AG04450 (cell line): ENCODE measurements at regions of chr2 and their contacts with region 1.

Region 1: DNA sequence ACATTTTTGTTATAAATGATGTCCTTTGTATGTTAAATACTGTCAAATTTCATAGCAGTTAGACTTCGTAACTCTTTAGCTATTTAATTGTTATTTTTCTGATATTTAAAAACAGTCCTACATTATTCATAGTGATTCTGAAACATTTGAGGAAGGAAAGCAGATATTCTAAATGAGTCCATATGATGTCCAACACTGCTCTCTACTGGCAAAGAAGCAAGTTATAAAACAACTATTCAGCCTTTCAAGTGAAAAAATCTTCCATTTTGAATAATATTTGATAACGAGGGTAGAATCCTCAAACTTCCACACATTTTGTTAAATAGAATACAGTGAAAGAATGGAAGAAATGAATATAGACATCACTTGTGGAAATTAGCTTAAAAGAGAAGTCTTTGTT is 220.8 kb downstream of the GULP1 start:
- DNase-seq: peak; percentile 43
- H3K4me3 ChIP-seq: no peak overlapping the region
- H3K27ac ChIP-seq: no peak overlapping the region
- H3K27me3 ChIP-seq: no peaks in the 10 kb centered on the region
- CTCF ChIP-seq: peak; percentile 67

Region 2: DNA sequence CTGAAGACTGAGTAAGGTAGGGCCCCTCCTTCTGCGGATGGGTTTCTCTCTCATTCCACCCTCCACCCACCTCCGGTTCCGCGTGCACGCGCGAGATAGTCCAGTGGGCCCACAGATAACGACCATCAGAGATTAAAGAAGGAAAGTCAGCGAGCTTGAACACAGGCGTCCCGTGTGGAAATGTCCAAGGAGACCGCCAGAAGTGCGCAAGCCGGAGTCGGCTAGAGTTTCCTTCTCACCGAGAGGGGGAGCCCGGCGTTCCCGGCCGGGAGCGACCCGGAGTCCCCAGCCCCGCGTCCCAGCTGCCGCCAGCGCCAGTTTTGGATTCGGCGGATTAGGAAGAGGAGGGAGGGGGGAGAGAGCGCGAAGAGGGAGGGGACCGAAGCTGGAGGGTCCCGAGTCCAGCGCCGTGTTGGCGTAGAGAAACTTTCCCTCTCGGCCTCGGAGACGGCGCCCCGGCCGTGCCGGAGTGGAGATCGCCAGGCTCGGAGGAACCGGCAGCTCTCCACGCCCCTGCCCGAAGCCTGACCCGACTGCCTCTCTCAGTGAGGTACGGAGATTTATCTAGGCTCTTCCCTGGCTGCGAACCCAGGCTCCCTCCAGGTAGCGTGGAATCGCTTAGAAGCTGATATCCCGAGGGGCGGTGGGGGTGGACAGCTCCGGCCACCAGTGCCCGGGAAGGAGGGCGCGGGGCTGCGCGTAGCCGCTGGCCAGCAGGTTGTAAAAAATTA is 220.7 kb before region 1 on chr2 and contains the start of gene GULP1:
- CTCF ChIA-PET with region 1: interaction called, 31 read pairs
- POLR2A ChIA-PET with region 1: interaction called, 5 read pairs
- DNase-seq: no peak
- H3K4me3 ChIP-seq: peak within 1 kb of the TSS; percentile 83
- H3K27ac ChIP-seq: peak within 1 kb of the TSS; percentile 86
- H3K27me3 ChIP-seq: no peaks in the 10 kb centered on the region
- CTCF ChIP-seq: peak; percentile 77
- polyA plus RNA-seq, gene GULP1: 32.7 and 44.7 TPM in 2 replicates

Region 3: GRCh38 chr2:188701836-188702235 is 189.4 kb after region 1 on chr2:
- CTCF ChIA-PET with region 1: no interaction called
- POLR2A ChIA-PET with region 1: no interaction called
- DNase-seq: no peak
- H3K4me3 ChIP-seq: no peak overlapping the region
- H3K27ac ChIP-seq: no peak overlapping the region
- H3K27me3 ChIP-seq: no peaks in the 10 kb centered on the region
- CTCF ChIP-seq: no peak